Activated B cell treated with CpG ODN at 0.5 μM for 24 hours (primary cell): ENCODE measurements at regions of chr9 and their contacts with region 1.

Region 1: GRCh38 chr9:27529316-27530278 is at the start of gene MOB3B:
- DNase-seq: peak; percentile 82
- ATAC-seq: peak; percentile 76
- H3K4me3 Mint-ChIP-seq: peak within 1 kb of the TSS; percentile 95
- H3K27ac Mint-ChIP-seq: peak within 1 kb of the TSS; percentile 91
- H3K4me1 Mint-ChIP-seq: peaks cover 43% of the 10 kb centered on the region
- H3K27me3 Mint-ChIP-seq: no peaks in the 10 kb centered on the region
- CTCF ChIP-seq: peak; percentile 23
- total RNA-seq, gene MOB3B: 7.3 and 10.0 TPM in 2 replicates

Region 2: DNA sequence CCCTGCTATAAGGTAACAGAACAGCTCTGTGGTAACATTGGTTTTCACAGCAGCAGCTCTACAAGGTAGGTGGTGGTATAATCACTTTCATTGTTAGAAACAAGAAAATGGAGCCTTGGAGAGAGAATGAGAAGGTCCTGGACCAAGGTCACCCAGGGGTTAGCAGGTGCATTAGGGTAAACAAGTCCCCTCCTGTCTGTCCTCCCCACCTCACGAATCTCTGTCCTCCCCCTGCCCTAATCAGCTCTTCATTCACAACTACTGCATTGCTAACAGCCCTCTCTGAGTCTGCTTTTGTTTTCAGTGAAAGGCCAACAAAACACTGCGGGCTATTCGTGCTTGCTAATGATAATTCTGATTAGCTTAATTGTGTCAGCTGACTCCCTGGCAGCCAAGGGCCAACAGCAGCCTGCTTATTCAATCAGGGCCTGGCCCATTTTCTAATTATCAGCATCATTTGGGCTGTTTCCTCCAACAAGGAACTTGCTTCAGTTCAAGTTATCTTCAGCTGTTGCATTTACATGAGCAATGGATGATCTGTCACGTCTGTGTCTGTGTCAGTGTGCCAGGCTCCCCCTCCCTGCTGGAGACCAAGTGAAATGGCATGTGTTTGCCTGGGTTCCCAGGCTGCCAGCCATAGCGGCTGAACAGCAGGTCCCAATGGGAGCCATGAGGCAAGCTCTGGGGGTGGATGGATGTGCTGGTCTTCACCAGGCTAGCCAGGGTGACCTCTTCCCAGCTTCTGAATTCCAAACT is 175.9 kb before region 1 on chr9:
- CTCF ChIA-PET with region 1: interaction called, 4 read pairs
- POLR2A ChIA-PET with region 1: interaction called, 6 read pairs
- intact Hi-C with region 1: loop called (anchors 1 kb)
- DNase-seq: no peak
- ATAC-seq: peak; percentile 78
- H3K4me3 Mint-ChIP-seq: no peak overlapping the region
- H3K27ac Mint-ChIP-seq: peak overlapping the region; percentile 14
- H3K4me1 Mint-ChIP-seq: peaks cover 58% of the 10 kb centered on the region
- H3K27me3 Mint-ChIP-seq: no peaks in the 10 kb centered on the region
- CTCF ChIP-seq: no peak

Region 3: GRCh38 chr9:27377147-27377807 is 152.3 kb before region 1 on chr9:
- CTCF ChIA-PET with region 1: interaction called, 18 read pairs
- POLR2A ChIA-PET with region 1: interaction called, 8 read pairs
- intact Hi-C with region 1: loop called (anchors 1 kb)
- DNase-seq: no peak
- ATAC-seq: peak; percentile 15
- H3K4me3 Mint-ChIP-seq: peak overlapping the region; percentile 68
- H3K27ac Mint-ChIP-seq: peak overlapping the region; percentile 88
- H3K4me1 Mint-ChIP-seq: peaks cover 72% of the 10 kb centered on the region
- H3K27me3 Mint-ChIP-seq: no peaks in the 10 kb centered on the region
- CTCF ChIP-seq: no peak

Region 4: GRCh38 chr9:27394154-27394825 is 135.3 kb before region 1 on chr9:
- CTCF ChIA-PET with region 1: interaction called, 14 read pairs
- POLR2A ChIA-PET with region 1: no interaction called
- intact Hi-C with region 1: loop called (anchors 2 kb)
- DNase-seq: no peak
- ATAC-seq: no peak
- H3K4me3 Mint-ChIP-seq: no peak overlapping the region
- H3K27ac Mint-ChIP-seq: peak overlapping the region; percentile 80
- H3K4me1 Mint-ChIP-seq: peaks cover 69% of the 10 kb centered on the region
- H3K27me3 Mint-ChIP-seq: no peaks in the 10 kb centered on the region
- CTCF ChIP-seq: no peak

Region 5: DNA sequence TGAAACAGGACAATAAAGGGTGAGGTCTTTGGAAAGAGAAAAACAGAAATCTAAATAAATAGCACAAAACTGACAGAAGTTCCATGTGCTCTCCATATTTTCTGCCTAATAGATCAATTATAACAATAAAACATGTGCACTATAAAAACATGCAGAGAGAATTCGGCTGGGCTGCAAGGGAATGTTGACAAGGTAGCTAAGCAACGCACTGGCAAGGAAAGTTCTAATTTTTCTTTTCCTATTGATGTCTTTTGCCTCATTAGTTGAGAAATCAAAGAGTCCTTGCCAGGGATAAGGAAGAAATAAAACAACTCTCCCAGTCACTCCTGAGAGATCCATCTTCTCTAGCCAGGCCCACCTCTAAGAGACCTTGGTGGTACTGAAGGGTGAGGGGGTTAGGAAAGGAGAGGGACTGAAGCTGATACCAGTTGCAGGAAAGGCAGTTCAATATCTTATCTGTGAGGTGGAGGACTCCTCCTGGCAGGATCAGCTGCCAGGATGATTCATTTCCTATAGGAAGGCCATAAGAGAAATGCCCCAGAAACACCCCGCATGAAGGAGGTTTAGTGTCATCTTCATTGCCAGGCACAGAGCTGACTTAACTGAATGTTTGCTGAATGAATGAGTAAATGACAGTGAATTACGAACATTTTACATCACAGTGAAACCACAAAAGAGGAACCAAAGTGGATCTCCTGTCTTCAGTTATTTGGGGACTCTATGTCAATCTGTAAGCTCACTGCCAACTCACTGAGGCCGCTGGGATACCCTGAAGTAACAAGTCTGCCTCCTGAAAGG is 69.2 kb before region 1 on chr9:
- CTCF ChIA-PET with region 1: interaction called, 17 read pairs
- POLR2A ChIA-PET with region 1: interaction called, 10 read pairs
- intact Hi-C with region 1: loop called (anchors 1 kb)
- DNase-seq: no peak
- ATAC-seq: peak; percentile 93
- H3K4me3 Mint-ChIP-seq: peak overlapping the region; percentile 66
- H3K27ac Mint-ChIP-seq: peak overlapping the region; percentile 86
- H3K4me1 Mint-ChIP-seq: peaks cover 61% of the 10 kb centered on the region
- H3K27me3 Mint-ChIP-seq: no peaks in the 10 kb centered on the region
- CTCF ChIP-seq: no peak

Region 6: DNA sequence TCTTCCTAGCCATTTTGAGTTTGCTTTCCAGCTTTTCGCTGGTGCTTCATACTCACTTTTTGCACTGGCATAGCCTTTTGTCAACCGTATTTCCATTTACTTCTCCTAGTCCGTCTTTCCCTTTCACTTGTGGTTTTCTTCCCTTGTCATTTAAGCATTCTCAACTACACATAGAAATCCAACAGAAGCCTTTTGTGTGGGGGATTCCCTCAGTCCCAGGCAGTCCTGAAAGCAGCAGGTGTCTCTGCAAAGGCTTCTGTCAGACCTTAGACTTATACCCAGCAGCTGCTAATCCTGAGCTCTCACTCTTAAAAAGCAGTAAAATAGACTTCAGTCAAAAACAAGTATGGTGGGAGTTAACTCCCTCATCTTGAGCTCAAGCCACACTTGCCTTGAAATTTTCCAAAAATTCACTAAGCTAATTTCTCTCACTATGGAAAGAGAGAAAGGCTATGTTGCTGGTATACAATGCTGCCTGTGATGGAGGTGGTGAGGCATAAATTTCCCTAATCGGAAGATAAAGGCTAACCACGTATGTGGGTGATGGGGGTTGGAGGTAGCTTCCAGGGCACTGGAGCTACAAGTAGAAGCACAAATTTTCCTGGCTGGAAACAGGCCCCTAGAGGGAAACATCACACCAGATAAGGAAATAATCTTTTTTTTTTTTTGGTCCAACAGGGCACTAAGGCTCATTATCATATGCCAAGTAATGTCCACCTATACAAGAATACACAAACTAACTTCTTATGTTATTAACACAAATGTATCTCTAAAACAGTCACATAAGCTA is 40.3 kb before region 1 on chr9:
- CTCF ChIA-PET with region 1: interaction called, 14 read pairs
- POLR2A ChIA-PET with region 1: interaction called, 10 read pairs
- intact Hi-C with region 1: loop called (anchors 1 kb)
- DNase-seq: no peak
- ATAC-seq: peak; percentile 40
- H3K4me3 Mint-ChIP-seq: peak overlapping the region; percentile 20
- H3K27ac Mint-ChIP-seq: peak overlapping the region; percentile 46
- H3K4me1 Mint-ChIP-seq: peaks cover 78% of the 10 kb centered on the region
- H3K27me3 Mint-ChIP-seq: no peaks in the 10 kb centered on the region
- CTCF ChIP-seq: no peak

Region 7: GRCh38 chr9:27539479-27540441 is 10.2 kb after region 1 on chr9:
- CTCF ChIA-PET with region 1: no interaction called
- POLR2A ChIA-PET with region 1: no interaction called
- intact Hi-C with region 1: no loop called
- DNase-seq: no peak
- ATAC-seq: no peak
- H3K4me3 Mint-ChIP-seq: no peak overlapping the region
- H3K27ac Mint-ChIP-seq: no peak overlapping the region
- H3K4me1 Mint-ChIP-seq: peaks cover 2% of the 10 kb centered on the region
- H3K27me3 Mint-ChIP-seq: no peaks in the 10 kb centered on the region
- CTCF ChIP-seq: no peak

Region 8: DNA sequence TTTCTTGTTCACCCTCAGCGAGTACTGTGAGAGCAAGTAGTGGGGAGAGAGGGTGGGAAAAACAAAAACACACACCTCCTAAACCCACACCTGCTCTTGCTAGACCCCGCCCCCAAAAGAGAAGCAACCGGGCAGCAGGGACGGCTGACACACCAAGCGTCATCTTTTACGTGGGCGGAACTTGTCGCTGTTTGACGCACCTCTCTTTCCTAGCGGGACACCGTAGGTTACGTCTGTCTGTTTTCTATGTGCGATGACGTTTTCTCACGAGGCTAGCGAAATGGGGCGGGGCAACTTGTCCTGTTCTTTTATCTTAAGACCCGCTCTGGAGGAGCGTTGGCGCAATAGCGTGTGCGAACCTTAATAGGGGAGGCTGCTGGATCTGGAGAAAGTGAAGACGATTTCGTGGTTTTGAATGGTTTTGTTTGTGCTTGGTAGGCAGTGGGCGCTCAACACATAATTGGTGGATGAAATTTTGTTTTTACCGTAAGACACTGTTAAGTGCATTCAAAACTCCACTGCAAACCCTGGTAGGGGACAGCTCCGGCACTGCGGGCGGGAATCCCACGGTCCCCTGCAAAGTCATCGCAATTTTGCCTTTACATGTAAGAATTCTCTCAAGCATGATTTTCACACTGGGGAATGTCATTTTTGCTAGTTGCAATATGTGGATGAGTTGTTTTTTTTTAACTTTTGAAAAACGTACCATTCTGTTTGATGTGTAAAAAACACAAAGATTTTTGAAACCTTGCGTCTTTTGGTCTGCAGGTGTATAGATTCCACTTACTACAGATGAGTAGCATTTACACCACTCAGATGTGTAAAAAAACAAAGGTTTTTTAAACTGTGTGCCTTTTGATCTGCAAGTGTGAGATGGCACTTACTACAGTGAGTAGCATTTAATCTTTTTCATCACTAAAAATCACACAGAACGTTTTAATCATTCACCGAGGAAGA is 44.3 kb after region 1 on chr9:
- CTCF ChIA-PET with region 1: no interaction called
- POLR2A ChIA-PET with region 1: no interaction called
- intact Hi-C with region 1: loop called (anchors 1 kb)
- DNase-seq: peak; percentile 77
- ATAC-seq: peak; percentile 88
- H3K4me3 Mint-ChIP-seq: peak overlapping the region; percentile 97
- H3K27ac Mint-ChIP-seq: peak overlapping the region; percentile 99
- H3K4me1 Mint-ChIP-seq: peaks cover 24% of the 10 kb centered on the region
- H3K27me3 Mint-ChIP-seq: no peaks in the 10 kb centered on the region
- CTCF ChIP-seq: no peak